Calu3 (cell line): ENCODE measurements at regions of chr6 and their contacts with region 1.

Region 1: GRCh38 chr6:127641905-127642304 is 64.9 kb downstream of the C6orf58 start:
- DNase-seq: peak; percentile 34
- H3K4me3 Mint-ChIP-seq: no peak overlapping the region
- H3K27ac Mint-ChIP-seq: no peak overlapping the region
- H3K4me1 Mint-ChIP-seq: no peaks in the 10 kb centered on the region
- H3K27me3 Mint-ChIP-seq: peaks cover 17% of the 10 kb centered on the region
- CTCF ChIP-seq: peak; percentile 78

Region 2: DNA sequence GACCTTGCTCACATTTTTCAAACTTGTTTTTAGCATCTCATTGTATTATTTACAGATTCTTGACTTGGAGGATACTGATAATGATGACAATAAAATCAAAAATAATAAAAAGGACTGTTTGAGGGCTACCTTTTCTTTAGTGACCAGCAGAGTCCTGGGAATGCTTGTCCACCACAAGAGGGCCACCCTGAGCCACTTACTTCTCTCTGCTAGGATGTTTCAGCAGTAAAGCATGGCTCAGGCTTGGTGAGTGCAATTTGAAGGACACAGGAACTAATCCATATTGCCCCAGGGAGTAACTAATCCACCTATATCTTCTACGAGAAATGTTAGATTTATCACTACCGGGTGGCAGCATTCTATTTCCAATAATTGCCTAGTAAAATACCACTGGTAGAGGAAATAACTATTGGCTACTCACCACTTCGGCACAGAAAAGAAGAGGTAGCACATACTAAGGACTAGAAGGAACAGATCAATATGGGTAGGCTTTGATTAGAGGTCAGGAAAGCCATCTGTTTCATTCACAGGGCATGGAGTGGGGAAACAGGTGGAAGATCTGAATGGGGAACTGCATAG is 176.9 kb before region 1 on chr6:
- CTCF ChIA-PET with region 1: no interaction called
- intact Hi-C with region 1: no loop called
- DNase-seq: peak; percentile 71
- H3K4me3 Mint-ChIP-seq: no peak overlapping the region
- H3K27ac Mint-ChIP-seq: no peak overlapping the region
- H3K4me1 Mint-ChIP-seq: no peaks in the 10 kb centered on the region
- H3K27me3 Mint-ChIP-seq: no peaks in the 10 kb centered on the region
- CTCF ChIP-seq: peak; percentile 65

Region 3: GRCh38 chr6:127554435-127555006 is 87.4 kb before region 1 on chr6:
- CTCF ChIA-PET with region 1: interaction called, 8 read pairs
- intact Hi-C with region 1: loop called (anchors 1 kb)
- DNase-seq: peak; percentile 54
- H3K4me3 Mint-ChIP-seq: no peak overlapping the region
- H3K27ac Mint-ChIP-seq: no peak overlapping the region
- H3K4me1 Mint-ChIP-seq: peaks cover 7% of the 10 kb centered on the region
- H3K27me3 Mint-ChIP-seq: no peaks in the 10 kb centered on the region
- CTCF ChIP-seq: no peak

Region 4: DNA sequence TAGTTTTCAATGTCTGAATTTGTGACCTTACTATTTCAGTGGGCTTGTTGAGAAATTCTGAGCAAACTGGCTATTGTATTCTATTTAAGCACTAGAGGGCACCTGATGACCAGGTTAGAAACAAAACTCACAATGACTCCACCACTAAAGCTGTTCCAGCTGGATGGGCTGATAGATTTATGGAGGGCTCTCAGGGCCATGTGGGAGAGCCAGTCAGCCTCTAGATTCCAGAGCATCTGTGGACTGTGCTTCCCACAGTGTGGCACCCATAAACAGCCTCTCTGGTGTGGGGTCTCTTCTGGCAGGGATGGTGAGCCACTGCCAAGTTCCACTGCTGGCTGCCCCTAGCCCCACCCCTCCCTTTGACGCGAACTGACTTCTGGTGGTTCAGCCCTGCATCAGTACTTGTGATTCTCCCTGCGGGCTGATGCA is 35.8 kb before region 1 on chr6:
- CTCF ChIA-PET with region 1: interaction called, 7 read pairs
- intact Hi-C with region 1: loop called (anchors 1 kb)
- DNase-seq: peak; percentile 5
- H3K4me3 Mint-ChIP-seq: no peak overlapping the region
- H3K27ac Mint-ChIP-seq: no peak overlapping the region
- H3K4me1 Mint-ChIP-seq: no peaks in the 10 kb centered on the region
- H3K27me3 Mint-ChIP-seq: no peaks in the 10 kb centered on the region
- CTCF ChIP-seq: no peak

Region 5: DNA sequence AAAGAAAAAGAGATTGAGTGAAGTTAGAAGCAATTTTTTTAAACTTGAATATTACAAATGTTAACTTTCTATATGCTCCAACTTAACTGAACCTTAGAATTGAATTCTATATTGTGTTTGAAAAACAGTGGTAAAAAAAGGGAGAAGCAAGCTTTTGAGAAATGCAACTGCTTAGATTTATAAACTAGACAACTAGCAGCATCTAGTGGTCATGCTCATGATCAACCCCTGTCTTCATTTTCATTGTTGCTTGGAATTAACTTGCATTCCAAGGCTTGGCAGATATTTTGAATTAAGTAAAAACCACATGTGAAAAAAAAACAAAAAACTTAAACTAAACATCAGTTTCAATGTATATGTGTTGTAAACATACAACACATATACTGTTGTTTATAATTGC is 48.2 kb after region 1 on chr6:
- CTCF ChIA-PET with region 1: no interaction called
- intact Hi-C with region 1: no loop called
- DNase-seq: peak; percentile 1
- H3K4me3 Mint-ChIP-seq: no peak overlapping the region
- H3K27ac Mint-ChIP-seq: no peak overlapping the region
- H3K4me1 Mint-ChIP-seq: no peaks in the 10 kb centered on the region
- H3K27me3 Mint-ChIP-seq: peaks cover 30% of the 10 kb centered on the region
- CTCF ChIP-seq: no peak

Region 6: GRCh38 chr6:127967708-127968107 is 325.8 kb after region 1 on chr6:
- CTCF ChIA-PET with region 1: no interaction called
- intact Hi-C with region 1: no loop called
- DNase-seq: no peak
- H3K4me3 Mint-ChIP-seq: no peak overlapping the region
- H3K27ac Mint-ChIP-seq: no peak overlapping the region
- H3K4me1 Mint-ChIP-seq: peaks cover 14% of the 10 kb centered on the region
- H3K27me3 Mint-ChIP-seq: no peaks in the 10 kb centered on the region
- CTCF ChIP-seq: no peak

Region 7: DNA sequence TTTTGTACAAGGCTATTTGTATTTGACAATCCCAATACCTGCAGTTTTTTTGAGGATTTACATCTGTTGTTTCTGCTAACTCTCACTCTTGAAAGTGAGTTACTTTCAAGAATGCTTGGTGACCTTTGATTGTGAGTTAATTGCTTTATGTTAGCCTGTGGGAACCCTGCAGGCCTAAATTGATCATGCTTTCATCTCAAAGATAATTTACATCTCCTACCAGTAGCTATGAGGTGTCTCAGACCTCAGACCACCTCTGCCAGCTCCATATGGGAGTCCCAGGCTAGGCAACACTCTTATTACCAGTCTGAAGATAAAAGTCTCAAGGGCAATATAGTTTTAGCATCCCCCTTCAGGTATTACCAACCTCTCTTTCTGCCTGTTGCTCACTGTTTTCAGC is 375.4 kb after region 1 on chr6:
- CTCF ChIA-PET with region 1: no interaction called
- intact Hi-C with region 1: no loop called
- DNase-seq: no peak
- H3K4me3 Mint-ChIP-seq: no peak overlapping the region
- H3K27ac Mint-ChIP-seq: no peak overlapping the region
- H3K4me1 Mint-ChIP-seq: peaks cover 16% of the 10 kb centered on the region
- H3K27me3 Mint-ChIP-seq: no peaks in the 10 kb centered on the region
- CTCF ChIP-seq: no peak